ENCODE measurements at regions of chr5 and their contacts with region 1.

Region 1: GRCh38 chr5:151740336-151740942 is 18.0 kb downstream of the ATOX1 start:
- DNase-seq: peak; percentile 85
- H3K4me3 ChIP-seq: peak overlapping the region; percentile 27
- H3K27ac ChIP-seq: peak overlapping the region; percentile 99
- H3K27me3 ChIP-seq: no peaks in the 10 kb centered on the region
- CTCF ChIP-seq: peak; percentile 84

Region 2: DNA sequence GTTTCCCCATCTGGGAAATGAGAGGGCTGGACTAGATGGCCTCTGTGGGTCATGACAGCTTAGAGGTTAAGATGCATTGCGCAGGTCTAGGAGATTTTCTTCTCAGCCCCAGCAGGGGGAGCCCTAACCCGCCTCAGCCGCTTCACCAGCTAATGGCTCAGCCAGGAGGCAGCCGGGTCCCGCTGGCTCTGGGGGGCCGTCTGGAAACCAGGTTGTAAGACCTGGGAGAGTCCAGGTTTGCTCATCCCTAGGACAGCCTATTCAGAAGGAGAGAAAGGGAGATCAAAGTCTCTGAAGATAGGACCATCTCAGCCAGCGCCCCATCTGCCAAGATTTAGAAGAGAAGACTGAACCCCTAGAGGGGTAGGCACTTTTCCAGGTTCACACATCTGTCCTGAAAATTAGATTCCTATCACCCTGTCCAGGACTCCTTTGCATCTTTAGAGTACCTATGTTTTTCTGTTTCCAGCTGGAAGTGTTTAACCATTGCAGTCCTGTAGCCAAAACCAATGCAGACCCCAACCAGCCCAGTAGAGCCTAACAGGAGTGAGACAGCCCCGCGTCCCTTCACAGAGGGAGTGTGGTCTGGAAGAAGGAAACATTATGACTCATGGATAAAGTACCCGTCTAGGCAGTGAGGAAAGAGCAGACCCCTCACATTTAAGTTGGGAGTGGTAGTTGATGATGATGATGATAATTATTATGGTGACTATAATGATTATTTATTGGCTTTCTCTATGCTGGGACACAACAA is 81.3 kb before region 1 on chr5:
- CTCF ChIA-PET with region 1: interaction called, 136 read pairs
- POLR2A ChIA-PET with region 1: interaction called, 57 read pairs
- DNase-seq: no peak
- H3K4me3 ChIP-seq: no peak overlapping the region
- H3K27ac ChIP-seq: peak overlapping the region; percentile 74
- H3K27me3 ChIP-seq: no peaks in the 10 kb centered on the region
- CTCF ChIP-seq: peak; percentile 92

Region 3: GRCh38 chr5:151699071-151699901 is 41.2 kb before region 1 on chr5:
- CTCF ChIA-PET with region 1: interaction called, 28 read pairs
- POLR2A ChIA-PET with region 1: interaction called, 79 read pairs
- DNase-seq: peak; percentile 97
- H3K4me3 ChIP-seq: no peak overlapping the region
- H3K27ac ChIP-seq: peak overlapping the region; percentile 100
- H3K27me3 ChIP-seq: no peaks in the 10 kb centered on the region
- CTCF ChIP-seq: no peak

Region 4: DNA sequence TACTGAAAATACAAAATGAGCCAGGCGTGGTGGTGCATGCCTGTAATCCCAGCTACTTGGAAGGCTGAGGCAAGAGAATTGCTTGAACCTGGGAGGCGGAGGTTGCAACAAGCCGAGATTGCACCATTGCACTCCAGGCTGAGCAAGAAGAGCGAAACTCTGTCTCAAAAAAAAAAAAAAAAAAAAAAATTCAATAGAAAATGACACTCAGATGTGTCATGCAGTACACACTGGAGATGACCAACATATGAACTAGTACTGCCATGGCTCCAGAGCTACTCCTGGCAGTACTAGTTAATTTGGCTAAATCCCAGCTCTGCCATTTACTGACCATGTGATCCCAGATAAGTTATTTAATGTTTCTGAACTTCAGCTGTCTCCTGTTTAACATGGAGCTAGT is 10.7 kb after region 1 on chr5:
- CTCF ChIA-PET with region 1: interaction called, 25 read pairs
- POLR2A ChIA-PET with region 1: interaction called, 3 read pairs
- DNase-seq: no peak
- H3K4me3 ChIP-seq: no peak overlapping the region
- H3K27ac ChIP-seq: no peak overlapping the region
- H3K27me3 ChIP-seq: no peaks in the 10 kb centered on the region
- CTCF ChIP-seq: no peak